CD8-positive, alpha-beta T cell (primary cell): ENCODE measurements at regions of chr4 and their contacts with region 1.

Region 1: DNA sequence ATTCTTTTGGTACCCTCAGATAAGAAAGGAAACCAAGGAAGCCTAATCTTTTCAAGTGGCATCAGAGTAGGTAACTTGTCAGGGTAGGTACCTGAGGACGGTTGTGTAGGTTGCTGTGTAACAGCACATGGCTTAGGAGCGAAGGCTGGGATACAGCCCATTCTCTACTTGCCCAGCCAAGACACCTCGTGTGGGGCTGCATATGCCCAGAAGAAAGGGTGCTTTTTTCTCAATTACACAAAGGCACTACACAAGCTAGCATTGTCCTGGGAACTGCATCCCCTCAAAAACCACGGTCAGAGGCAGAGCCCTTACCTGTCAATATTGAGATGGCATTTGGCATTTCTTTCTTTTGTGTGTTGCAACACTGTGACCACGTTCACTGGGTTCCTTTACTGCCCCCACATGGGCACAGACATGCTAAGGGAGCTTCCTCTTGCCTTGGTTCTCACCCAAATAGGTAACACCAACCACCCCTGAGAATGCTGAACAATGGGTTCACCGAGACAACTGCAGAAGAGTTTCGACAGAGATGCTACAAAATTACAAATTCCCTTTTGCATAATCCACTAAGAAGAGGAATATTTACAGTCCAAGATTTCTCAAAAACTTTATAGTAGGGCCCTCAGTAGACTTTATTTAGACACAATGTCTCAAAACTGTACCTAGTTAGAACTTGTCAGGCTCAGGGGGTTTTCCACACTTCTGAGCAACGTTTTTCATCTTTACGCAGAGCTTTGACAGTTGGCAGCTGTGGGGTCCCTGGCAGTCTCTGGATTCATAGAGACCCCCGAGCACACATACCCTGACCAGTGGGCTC is 35.8 kb upstream of the TNIP3 start:
- DNase-seq: peak in 6 of 9 experiments; percentile 11 to 79 (median 37)
- ATAC-seq: peak; percentile 87
- H3K4me3 ChIP-seq: peak overlapping the region in 1 of 2 experiments; percentile 6
- H3K4me3 Mint-ChIP-seq: peak overlapping the region; percentile 32
- H3K27ac ChIP-seq: peak overlapping the region in 1 of 2 experiments; percentile 52
- H3K27ac Mint-ChIP-seq: peak overlapping the region; percentile 19
- H3K4me1 ChIP-seq: peaks cover 19% of the 10 kb centered on the region
- H3K4me1 Mint-ChIP-seq: peaks cover 22% of the 10 kb centered on the region
- H3K27me3 ChIP-seq: no peaks in the 10 kb centered on the region
- H3K27me3 Mint-ChIP-seq: no peaks in the 10 kb centered on the region
- CTCF ChIP-seq: peak; percentile 27

Region 2: GRCh38 chr4:119765936-119766335 is 1434.0 kb before region 1 on chr4:
- CTCF ChIA-PET with region 1: no interaction called
- POLR2A ChIA-PET with region 1: no interaction called
- intact Hi-C with region 1: no loop called
- DNase-seq: no peak
- ATAC-seq: no peak
- H3K4me3 ChIP-seq: no peak overlapping the region
- H3K4me3 Mint-ChIP-seq: no peak overlapping the region
- H3K27ac ChIP-seq: no peak overlapping the region
- H3K27ac Mint-ChIP-seq: no peak overlapping the region
- H3K4me1 ChIP-seq: no peaks in the 10 kb centered on the region
- H3K4me1 Mint-ChIP-seq: no peaks in the 10 kb centered on the region
- H3K27me3 ChIP-seq: no peaks in the 10 kb centered on the region
- H3K27me3 Mint-ChIP-seq: peaks cover 3% of the 10 kb centered on the region
- CTCF ChIP-seq: no peak

Region 3: DNA sequence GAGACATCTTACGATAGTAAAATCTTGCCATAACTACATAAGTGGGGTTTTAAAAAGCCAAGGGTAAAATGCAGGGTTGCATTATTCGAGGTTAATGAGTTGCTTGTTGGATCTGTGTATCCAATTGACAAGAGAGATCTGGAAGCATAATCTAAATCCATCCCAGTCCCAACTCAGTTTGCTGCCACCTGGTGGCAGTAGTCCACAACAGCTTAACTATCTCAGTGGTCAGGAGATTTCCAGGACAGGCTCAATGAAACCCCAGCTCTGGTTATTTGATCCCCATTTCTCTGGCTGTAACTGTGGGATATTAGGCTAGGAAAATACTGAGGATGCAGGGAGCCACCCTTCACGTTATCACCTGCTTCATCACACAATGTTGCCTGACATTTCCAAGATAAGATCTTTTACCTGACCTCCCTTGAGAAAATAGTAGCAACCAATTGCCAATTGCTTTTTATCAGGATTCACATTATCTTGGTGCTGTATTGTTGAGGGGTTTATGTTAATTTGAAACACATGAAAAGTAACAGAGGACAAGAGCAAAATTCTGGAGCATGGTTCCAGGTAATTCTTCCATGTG is 52.4 kb after region 1 on chr4:
- CTCF ChIA-PET with region 1: interaction called, 22 read pairs
- POLR2A ChIA-PET with region 1: interaction called, 5 read pairs
- intact Hi-C with region 1: no loop called
- DNase-seq: peak in 8 of 9 experiments; percentile 30 to 80 (median 62)
- ATAC-seq: no peak
- H3K4me3 ChIP-seq: no peak overlapping the region
- H3K4me3 Mint-ChIP-seq: no peak overlapping the region
- H3K27ac ChIP-seq: peak overlapping the region in 1 of 2 experiments; percentile 95
- H3K27ac Mint-ChIP-seq: peak overlapping the region; percentile 55
- H3K4me1 ChIP-seq: peaks cover 36% of the 10 kb centered on the region
- H3K4me1 Mint-ChIP-seq: peaks cover 59% of the 10 kb centered on the region
- H3K27me3 ChIP-seq: no peaks in the 10 kb centered on the region
- H3K27me3 Mint-ChIP-seq: no peaks in the 10 kb centered on the region
- CTCF ChIP-seq: peak; percentile 85

Region 4: DNA sequence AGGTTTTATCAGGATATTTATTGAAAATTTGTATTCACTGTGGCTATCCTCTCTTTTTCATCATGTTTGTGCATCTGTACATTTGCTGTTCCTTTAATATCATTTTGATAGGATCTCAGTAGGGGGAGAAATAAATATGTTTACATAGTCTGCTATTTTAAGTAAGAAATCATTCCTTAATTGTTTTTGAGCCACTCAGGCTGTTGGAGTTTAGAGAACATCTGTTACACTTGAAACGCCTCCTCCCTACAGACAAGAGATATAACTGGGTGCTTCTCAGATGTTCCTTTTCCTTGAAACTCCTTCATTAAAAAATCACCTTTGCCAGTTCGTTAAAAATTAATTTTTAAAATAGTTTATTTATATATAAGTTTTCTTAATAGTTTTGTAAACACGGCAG is 121.5 kb after region 1 on chr4:
- CTCF ChIA-PET with region 1: no interaction called
- POLR2A ChIA-PET with region 1: no interaction called
- intact Hi-C with region 1: no loop called
- DNase-seq: no peak
- ATAC-seq: no peak
- H3K4me3 ChIP-seq: no peak overlapping the region
- H3K4me3 Mint-ChIP-seq: no peak overlapping the region
- H3K27ac ChIP-seq: no peak overlapping the region
- H3K27ac Mint-ChIP-seq: no peak overlapping the region
- H3K4me1 ChIP-seq: no peaks in the 10 kb centered on the region
- H3K4me1 Mint-ChIP-seq: no peaks in the 10 kb centered on the region
- H3K27me3 ChIP-seq: no peaks in the 10 kb centered on the region
- H3K27me3 Mint-ChIP-seq: peaks cover 14% of the 10 kb centered on the region
- CTCF ChIP-seq: no peak